Psoas muscle (tissue), 8 donors: ENCODE measurements at regions of chr15 and their contacts with region 1.

Region 1: DNA sequence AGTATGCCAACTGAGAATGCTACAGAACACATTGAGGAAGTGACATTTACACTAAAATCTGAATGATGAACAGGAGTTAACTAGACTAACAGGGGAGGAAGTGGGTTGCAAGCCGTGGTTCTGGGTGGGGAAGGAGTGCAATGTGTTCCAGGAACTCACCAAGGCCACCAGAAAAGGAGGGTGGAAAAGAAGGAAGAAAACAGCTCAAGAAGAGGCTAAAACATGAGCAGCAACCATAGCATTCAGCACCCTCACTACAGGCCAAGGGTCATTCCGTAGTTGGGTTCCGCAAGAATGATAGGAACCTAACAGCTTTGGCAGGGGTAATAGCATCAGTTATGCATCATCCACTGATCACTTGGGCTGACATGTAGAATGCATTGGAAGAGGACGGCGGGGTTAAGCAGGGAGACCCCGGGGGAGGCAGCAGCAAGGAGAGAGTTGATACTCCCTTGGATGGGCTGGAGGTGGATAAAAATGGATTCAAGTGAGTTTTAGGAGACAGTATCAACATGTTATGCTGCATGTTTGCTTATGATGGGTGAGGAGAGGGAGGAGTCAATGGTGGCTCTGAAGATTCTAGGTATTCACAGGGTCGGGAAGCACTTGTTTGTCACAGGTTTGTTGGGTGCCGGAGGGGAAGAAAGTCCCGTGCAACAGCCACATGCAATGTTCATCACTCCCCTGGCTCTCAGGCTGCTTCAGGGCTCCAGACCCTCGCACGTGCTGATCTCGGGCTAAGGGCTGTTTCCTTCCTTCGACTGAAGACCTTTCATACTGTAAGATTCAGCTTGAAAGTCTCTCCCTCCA is 53.2 kb downstream of the LIPC start:
- DNase-seq: no peak
- ATAC-seq: no peak
- H3K4me3 ChIP-seq: no peak overlapping the region
- H3K27ac ChIP-seq: no peak overlapping the region
- H3K4me1 ChIP-seq: no peaks in the 10 kb centered on the region
- H3K27me3 ChIP-seq: no peaks in the 10 kb centered on the region
- CTCF ChIP-seq: no peak

Region 2: GRCh38 chr15:58438956-58439355 is 46.0 kb before region 1 on chr15:
- intact Hi-C with region 1: loop called in 1 of 2 experiments (anchors 5 kb)
- DNase-seq: no peak
- ATAC-seq: peak; percentile 60 to 84 (median 76)
- H3K4me3 ChIP-seq: no peak overlapping the region
- H3K27ac ChIP-seq: no peak overlapping the region
- H3K4me1 ChIP-seq: peaks cover 32% of the 10 kb centered on the region
- H3K27me3 ChIP-seq: no peaks in the 10 kb centered on the region
- CTCF ChIP-seq: peak; percentile 18

Region 3: GRCh38 chr15:58568157-58568571 is 83.2 kb after region 1 on chr15:
- intact Hi-C with region 1: no loop called
- DNase-seq: no peak
- ATAC-seq: no peak
- H3K4me3 ChIP-seq: no peak overlapping the region
- H3K27ac ChIP-seq: no peak overlapping the region
- H3K4me1 ChIP-seq: no peaks in the 10 kb centered on the region
- H3K27me3 ChIP-seq: no peaks in the 10 kb centered on the region
- CTCF ChIP-seq: no peak